ENCODE measurements at regions of chr14 and their contacts with region 1.

Region 1: GRCh38 chr14:77040059-77040740 is 11.7 kb upstream of the IRF2BPL start:
- DNase-seq: peak; percentile 97
- H3K4me3 Mint-ChIP-seq: peak overlapping the region; percentile 77
- H3K27ac Mint-ChIP-seq: peak overlapping the region; percentile 90
- H3K4me1 Mint-ChIP-seq: peaks cover 76% of the 10 kb centered on the region
- H3K27me3 Mint-ChIP-seq: no peaks in the 10 kb centered on the region

Region 2: DNA sequence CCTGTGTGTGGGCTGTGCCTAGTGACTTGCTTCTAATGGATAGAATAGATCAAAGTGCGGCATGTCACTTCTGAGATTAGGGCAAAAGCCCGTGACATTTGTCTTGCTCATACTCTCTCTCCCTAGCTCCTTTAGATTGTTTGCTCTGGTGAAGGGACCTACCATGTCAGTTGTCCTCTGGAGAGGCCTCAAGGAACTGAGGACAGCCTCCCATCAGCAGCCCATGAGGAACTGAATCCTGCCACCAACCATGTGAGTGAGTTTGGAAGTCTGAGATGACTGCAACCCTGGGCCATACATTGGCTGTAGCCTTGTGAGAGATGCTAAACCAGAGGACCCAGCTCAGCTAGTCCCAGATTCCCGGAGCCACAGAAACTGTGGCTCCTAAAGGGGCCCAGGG is 765.9 kb before region 1 on chr14:
- intact Hi-C with region 1: no loop called
- DNase-seq: no peak
- H3K4me3 Mint-ChIP-seq: no peak overlapping the region
- H3K27ac Mint-ChIP-seq: no peak overlapping the region
- H3K4me1 Mint-ChIP-seq: no peaks in the 10 kb centered on the region
- H3K27me3 Mint-ChIP-seq: no peaks in the 10 kb centered on the region

Region 3: DNA sequence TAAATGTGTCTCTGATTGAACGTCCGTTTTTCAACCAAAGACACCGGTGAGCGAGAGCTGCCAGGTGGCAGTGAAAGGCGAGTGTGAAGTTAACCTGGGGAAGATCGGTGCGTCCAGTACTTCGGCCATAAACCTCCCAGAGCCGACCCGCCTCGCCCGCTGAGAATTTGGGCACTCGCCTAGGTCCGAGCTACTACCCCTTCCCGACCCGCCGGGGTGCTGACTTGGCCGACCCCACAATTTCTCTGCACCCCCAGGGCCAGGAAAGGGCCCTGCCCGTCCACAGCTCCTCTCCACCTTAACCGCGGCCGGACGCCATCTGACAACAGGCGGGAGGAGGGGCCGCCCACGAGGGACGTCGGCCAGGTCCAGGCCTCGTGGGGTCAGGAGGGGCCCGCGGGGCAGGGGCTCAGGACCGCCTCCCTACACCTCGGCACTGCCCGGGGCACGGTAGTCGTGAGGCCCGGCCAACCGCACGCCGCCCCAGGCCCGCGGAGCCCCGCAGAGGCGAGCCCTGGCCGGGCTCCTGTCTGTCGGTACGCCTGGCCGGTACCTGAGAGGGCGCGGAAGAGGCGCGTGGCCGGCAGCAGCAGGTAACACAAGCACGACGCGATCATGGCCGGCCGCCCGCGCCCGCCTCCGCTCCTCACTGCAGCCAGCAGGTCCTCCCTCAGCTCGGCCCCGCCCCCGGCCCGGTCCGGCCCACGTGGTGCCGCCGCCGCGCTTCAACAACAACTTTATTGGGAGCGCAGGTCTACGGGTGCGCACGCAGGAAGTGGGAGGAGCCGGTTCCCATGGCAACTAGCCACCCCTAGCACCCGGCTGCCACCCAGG is 227.8 kb before region 1 on chr14 and contains the start of gene ANGEL1:
- intact Hi-C with region 1: loop called (anchors 5 kb)
- DNase-seq: peak; percentile 99
- H3K4me3 Mint-ChIP-seq: peak within 1 kb of the TSS; percentile 98
- H3K27ac Mint-ChIP-seq: peak within 1 kb of the TSS; percentile 91
- H3K4me1 Mint-ChIP-seq: peaks cover 21% of the 10 kb centered on the region
- H3K27me3 Mint-ChIP-seq: no peaks in the 10 kb centered on the region
- total RNA-seq, gene ANGEL1: 16.4 and 17.2 TPM in 2 replicates

Region 4: DNA sequence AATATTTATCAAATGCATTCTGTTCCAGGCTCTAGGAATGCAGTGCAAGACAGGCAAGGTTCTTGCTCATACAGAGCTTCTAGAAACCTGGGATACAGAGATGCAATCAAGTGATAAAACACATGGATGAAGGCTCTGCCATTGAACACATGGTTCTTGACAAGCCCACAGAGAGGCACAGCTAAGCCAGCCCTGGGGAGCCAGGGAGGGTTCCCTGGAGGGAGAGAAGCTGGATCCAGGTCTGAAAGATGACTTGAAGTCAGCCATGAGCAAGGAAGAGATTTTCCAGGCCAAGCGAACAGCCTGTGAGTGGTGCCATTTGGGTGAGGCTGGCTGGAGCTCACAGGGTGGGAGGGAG is 77.9 kb before region 1 on chr14:
- intact Hi-C with region 1: loop called (anchors 1 kb)
- DNase-seq: no peak
- H3K4me3 Mint-ChIP-seq: peak overlapping the region; percentile 78
- H3K27ac Mint-ChIP-seq: peak overlapping the region; percentile 97
- H3K4me1 Mint-ChIP-seq: peaks cover 81% of the 10 kb centered on the region
- H3K27me3 Mint-ChIP-seq: peaks cover 4% of the 10 kb centered on the region

Region 5: GRCh38 chr14:77023001-77023996 is 16.9 kb before region 1 on chr14:
- intact Hi-C with region 1: loop called (anchors 1 kb)
- DNase-seq: peak; percentile 74
- H3K4me3 Mint-ChIP-seq: peak overlapping the region; percentile 74
- H3K27ac Mint-ChIP-seq: peak overlapping the region; percentile 81
- H3K4me1 Mint-ChIP-seq: peaks cover 35% of the 10 kb centered on the region
- H3K27me3 Mint-ChIP-seq: no peaks in the 10 kb centered on the region

Region 6: GRCh38 chr14:77301103-77301502 is 260.9 kb after region 1 on chr14:
- intact Hi-C with region 1: loop called (anchors 2 kb)
- DNase-seq: peak; percentile 88
- H3K4me3 Mint-ChIP-seq: no peak overlapping the region
- H3K27ac Mint-ChIP-seq: no peak overlapping the region
- H3K4me1 Mint-ChIP-seq: peaks cover 22% of the 10 kb centered on the region
- H3K27me3 Mint-ChIP-seq: no peaks in the 10 kb centered on the region

Measured in activated CD4-positive, alpha-beta T cell treated with anti-CD3 and anti-CD28 coated beads, Interleukin-2, amount 10 ng/mL, durations not matched to agents 24 days and 14 days (primary cell).